HAP-1 (cell line): ENCODE measurements at regions of chr13 and their contacts with region 1.

Region 1: DNA sequence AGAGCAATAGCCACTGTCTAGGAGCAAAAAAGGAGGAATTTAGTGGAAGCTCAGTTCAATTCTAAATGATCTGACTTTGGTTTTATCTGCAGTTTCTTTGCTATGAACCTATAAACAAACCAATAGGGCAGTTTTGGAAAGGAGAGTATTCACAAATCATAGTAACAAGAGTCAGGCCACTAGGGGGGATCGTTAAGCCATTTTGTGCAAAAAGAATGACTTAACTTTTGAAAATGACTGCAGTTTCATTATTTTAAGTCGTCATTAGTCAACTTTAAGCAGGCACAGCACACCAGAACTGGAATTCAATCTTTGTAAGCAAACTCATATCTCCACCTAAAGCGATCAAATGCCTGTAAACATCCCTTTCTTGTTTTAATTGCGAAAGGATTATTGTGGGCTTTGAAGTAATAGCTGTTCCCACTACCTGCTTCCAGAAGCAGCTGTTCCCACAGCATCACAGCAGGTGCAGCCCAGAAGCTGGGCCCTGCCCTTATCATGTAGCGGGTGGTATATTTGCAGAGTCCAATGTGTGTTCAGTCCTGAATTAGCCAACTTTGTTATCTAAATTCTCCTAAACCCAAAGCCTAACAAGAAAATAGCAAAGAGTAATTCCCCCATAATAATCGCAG is 51.5 kb downstream of the SOX21 start:
- DNase-seq: peak; percentile 34 to 47
- H3K4me3 ChIP-seq: no peak overlapping the region
- H3K4me1 ChIP-seq: peaks cover 9% of the 10 kb centered on the region
- H3K27me3 ChIP-seq: no peaks in the 10 kb centered on the region

Region 2: DNA sequence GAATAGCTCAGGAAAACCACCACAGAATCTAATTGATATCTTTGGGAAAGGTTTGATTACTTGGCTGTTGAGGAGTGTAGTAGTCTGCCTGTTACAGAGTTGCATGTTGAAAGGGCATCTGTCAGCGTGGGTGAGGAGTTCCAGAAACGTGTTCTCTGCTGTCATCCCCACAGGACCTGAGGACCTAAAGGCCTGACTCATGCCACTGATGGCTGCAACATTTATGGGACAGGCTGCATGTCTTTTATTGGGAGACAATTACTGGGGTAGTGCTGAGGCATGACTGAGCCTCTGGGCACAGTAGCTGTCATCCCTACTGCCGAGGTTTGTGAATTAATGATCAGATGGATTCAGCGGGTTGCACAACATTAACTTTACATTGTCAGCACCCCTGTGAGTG is 908.3 kb before region 1 on chr13:
- in situ Hi-C with region 1: no loop called
- DNase-seq: no peak
- H3K4me3 ChIP-seq: no peak overlapping the region
- H3K4me1 ChIP-seq: peaks cover 20% of the 10 kb centered on the region
- H3K27me3 ChIP-seq: no peaks in the 10 kb centered on the region

Region 3: GRCh38 chr13:95176611-95177259 is 515.9 kb after region 1 on chr13:
- in situ Hi-C with region 1: loop called (anchors 10 kb)
- DNase-seq: no peak
- H3K4me3 ChIP-seq: no peak overlapping the region
- H3K4me1 ChIP-seq: no peaks in the 10 kb centered on the region
- H3K27me3 ChIP-seq: no peaks in the 10 kb centered on the region